ENCODE measurements at regions of chr10 and their contacts with region 1.

Region 1: GRCh38 chr10:43885823-43886222 is 237.1 kb upstream of the ZNF32 start:
- DNase-seq: peak in 1 of 2 experiments; percentile 51
- H3K4me3 ChIP-seq: no peak overlapping the region
- H3K27ac ChIP-seq: no peak overlapping the region
- H3K4me1 ChIP-seq: no peaks in the 10 kb centered on the region
- H3K27me3 ChIP-seq: no peaks in the 10 kb centered on the region
- CTCF ChIP-seq: peak; percentile 48 to 64 (median 58)
- EP300 ChIP-seq: no peak
- POLR2A ChIP-seq: no peak
- RAD21 ChIP-seq: peak; percentile 58 to 72

Region 2: DNA sequence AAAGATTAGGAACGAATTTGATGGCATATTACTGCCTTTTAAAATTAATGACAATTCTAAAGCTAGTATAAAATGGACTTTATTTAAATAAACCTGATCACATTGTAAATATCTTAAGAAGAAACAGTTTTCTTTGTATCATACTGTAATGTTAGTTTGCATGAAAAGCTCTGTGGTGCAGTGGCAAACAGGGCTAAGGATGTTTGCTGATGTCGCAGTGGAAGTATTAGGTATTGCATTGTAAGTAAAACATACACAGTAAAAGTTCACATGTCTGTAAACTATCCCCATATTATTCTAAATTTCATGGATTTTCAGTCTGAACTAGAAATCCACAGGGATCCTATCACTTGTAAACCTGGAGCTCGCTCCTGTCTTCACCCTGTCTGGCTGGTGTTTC is 15.5 kb after region 1 on chr10:
- CTCF ChIA-PET with region 1: interaction called, 16 read pairs
- POLR2A ChIA-PET with region 1: interaction called, 3 read pairs
- DNase-seq: no peak
- H3K4me3 ChIP-seq: no peak overlapping the region
- H3K27ac ChIP-seq: no peak overlapping the region
- H3K4me1 ChIP-seq: no peaks in the 10 kb centered on the region
- H3K27me3 ChIP-seq: no peaks in the 10 kb centered on the region
- CTCF ChIP-seq: no peak
- EP300 ChIP-seq: no peak
- POLR2A ChIP-seq: no peak
- RAD21 ChIP-seq: no peak

Measured in H1 (cell line).